H1 (cell line): ENCODE measurements at regions of chr15 and their contacts with region 1.

Region 1: DNA sequence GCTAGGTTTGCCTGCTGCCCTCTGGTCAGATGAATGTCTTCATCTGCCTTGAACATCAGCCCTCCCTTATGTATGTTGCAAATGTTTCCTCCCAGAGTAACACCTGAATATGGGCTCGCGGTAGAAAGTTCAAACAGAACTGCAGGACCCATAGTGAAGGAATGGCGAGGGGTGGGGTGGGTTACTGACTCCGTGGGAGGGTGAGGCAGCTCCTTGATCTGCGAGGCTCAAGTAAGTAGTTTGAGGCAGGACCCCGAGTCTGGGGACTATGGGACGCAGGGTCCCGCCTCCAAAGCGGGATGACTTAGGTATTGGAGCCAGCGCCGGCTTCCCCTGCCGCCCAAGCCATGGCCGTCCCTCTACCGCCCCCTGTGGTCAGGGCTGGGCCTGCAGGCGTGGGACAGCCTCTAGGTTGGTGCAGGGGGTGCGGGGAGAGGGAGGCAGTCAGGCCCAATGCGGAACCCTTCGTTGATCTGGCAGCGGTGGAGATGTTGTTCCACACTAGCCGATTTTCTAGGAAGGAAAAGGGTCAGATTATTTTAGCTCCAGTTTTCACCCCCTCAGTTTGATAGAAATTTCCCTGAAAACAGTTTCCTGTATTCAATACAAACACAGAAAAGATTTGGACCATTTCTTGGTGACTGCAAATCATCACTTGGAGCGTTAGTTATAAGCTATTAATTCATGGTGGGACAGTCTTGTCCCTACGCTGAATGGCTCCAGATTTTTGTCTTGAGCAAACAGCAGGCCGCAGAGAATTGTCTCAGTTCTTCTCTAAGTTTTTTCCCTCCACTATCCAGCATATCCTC is 72.3 kb downstream of the CORO2B start:
- DNase-seq: peak; percentile 72 to 100
- H3K4me3 ChIP-seq: peak overlapping the region in 2 of 4 experiments; percentile 19 to 33; a peak in 2 of 8 replicates
- H3K27ac ChIP-seq: no peak overlapping the region
- H3K4me1 ChIP-seq: peaks cover 6 to 19% (median 11%) of the 10 kb centered on the region in 4 experiments
- H3K27me3 ChIP-seq: no peaks in the 10 kb centered on the region
- CTCF ChIP-seq: peak; percentile 96 to 98 (median 97)
- EP300 ChIP-seq: no peak
- POLR2A ChIP-seq: no peak
- RAD21 ChIP-seq: peak; percentile 81 to 90

Region 2: GRCh38 chr15:68559345-68560310 is 91.5 kb before region 1 on chr15:
- CTCF ChIA-PET with region 1: interaction called, 721 read pairs
- POLR2A ChIA-PET with region 1: no interaction called
- DNase-seq: peak; percentile 80 to 95
- H3K4me3 ChIP-seq: peak overlapping the region; percentile 36 to 68 (median 52)
- H3K27ac ChIP-seq: no peak overlapping the region
- H3K4me1 ChIP-seq: peaks cover 0 to 22% (median 16%) of the 10 kb centered on the region in 4 experiments; a peak in 6 of 7 replicates
- H3K27me3 ChIP-seq: peaks cover 0 to 7% (median 4%) of the 10 kb centered on the region in 4 experiments; a peak in 3 of 7 replicates
- CTCF ChIP-seq: peak; percentile 86 to 93 (median 90)
- EP300 ChIP-seq: no peak
- POLR2A ChIP-seq: peak in 1 of 2 experiments; percentile 41; a peak in 1 of 3 replicates
- RAD21 ChIP-seq: peak; percentile 78 to 86

Region 3: GRCh38 chr15:68589783-68590710 is 61.1 kb before region 1 on chr15:
- CTCF ChIA-PET with region 1: interaction called, 35 read pairs
- POLR2A ChIA-PET with region 1: no interaction called
- DNase-seq: no peak
- H3K4me3 ChIP-seq: no peak overlapping the region
- H3K27ac ChIP-seq: no peak overlapping the region
- H3K4me1 ChIP-seq: peaks cover 2 to 9% (median 3%) of the 10 kb centered on the region in 4 experiments
- H3K27me3 ChIP-seq: no peaks in the 10 kb centered on the region
- CTCF ChIP-seq: no peak
- EP300 ChIP-seq: no peak
- POLR2A ChIP-seq: no peak
- RAD21 ChIP-seq: no peak

Region 4: GRCh38 chr15:68614286-68615035 is 36.6 kb before region 1 on chr15:
- CTCF ChIA-PET with region 1: interaction called, 23 read pairs
- POLR2A ChIA-PET with region 1: interaction called, 3 read pairs
- DNase-seq: peak; percentile 19 to 78
- H3K4me3 ChIP-seq: peak overlapping the region in 1 of 4 experiments; percentile 25; a peak in 2 of 8 replicates
- H3K27ac ChIP-seq: peak overlapping the region; percentile 44; the same call in 1 of the 2 replicates
- H3K4me1 ChIP-seq: peaks cover 7 to 17% (median 11%) of the 10 kb centered on the region in 4 experiments
- H3K27me3 ChIP-seq: no peaks in the 10 kb centered on the region
- CTCF ChIP-seq: peak in 1 of 3 experiments; percentile 10; a peak in 1 of 4 replicates
- EP300 ChIP-seq: no peak
- POLR2A ChIP-seq: no peak
- RAD21 ChIP-seq: no peak; a peak in 1 of 4 replicates

Region 5: DNA sequence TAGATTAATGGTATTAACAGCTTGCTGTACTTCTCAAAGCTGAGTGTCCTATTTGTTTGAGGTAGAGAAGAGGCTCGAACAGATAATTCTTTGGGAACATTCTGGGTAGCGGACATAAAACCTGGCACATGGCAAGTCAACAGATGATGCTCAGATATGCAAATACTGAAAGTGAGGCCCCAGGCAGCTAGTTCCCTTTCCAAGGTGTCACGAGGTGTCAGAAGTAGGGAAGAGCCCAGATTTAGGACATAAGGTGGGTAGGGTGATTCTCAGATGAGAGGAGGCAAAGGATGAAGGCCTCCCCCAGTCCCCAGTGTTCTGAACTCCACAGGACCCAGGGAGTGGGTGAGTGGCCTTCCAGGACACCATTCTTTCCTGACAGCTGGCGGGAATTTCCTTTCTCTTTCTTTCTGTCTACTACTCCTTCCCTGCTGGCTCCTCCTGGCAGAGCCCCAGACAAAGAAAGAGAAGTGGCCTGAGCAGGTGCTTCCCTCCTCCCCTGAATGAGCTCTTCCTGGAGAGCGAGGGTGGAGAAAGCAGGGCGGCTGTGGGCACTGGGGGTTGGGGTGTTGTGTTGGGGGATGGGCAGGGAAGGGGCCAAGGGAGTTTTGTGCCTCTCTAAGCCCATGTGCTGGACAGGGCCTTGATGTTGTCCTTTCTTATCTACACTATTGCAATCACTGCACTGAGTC is 15.2 kb after region 1 on chr15:
- CTCF ChIA-PET with region 1: interaction called, 569 read pairs
- POLR2A ChIA-PET with region 1: no interaction called
- DNase-seq: peak in 1 of 2 experiments; percentile 55
- H3K4me3 ChIP-seq: peak overlapping the region in 1 of 4 experiments; percentile 14; a peak in 2 of 8 replicates
- H3K27ac ChIP-seq: peak overlapping the region; percentile 44; the same call in 1 of the 2 replicates
- H3K4me1 ChIP-seq: peaks cover 5 to 13% (median 9%) of the 10 kb centered on the region in 4 experiments; a peak in 6 of 7 replicates
- H3K27me3 ChIP-seq: peaks cover 0 to 2% (median 0%) of the 10 kb centered on the region in 4 experiments; a peak in 1 of 7 replicates
- CTCF ChIP-seq: no peak
- EP300 ChIP-seq: peak in 1 of 2 experiments; percentile 46; a peak in 1 of 3 replicates
- POLR2A ChIP-seq: no peak
- RAD21 ChIP-seq: no peak; a peak in 1 of 4 replicates

Region 6: GRCh38 chr15:68700455-68701123 is 49.5 kb after region 1 on chr15:
- CTCF ChIA-PET with region 1: no interaction called
- POLR2A ChIA-PET with region 1: no interaction called
- DNase-seq: peak; percentile 13 to 63
- H3K4me3 ChIP-seq: 0 out of 8 replicates have a peak overlapping the region, but pooled peaks of 1 of the 4 experiments have one; percentile 6
- H3K27ac ChIP-seq: no peak overlapping the region
- H3K4me1 ChIP-seq: peaks cover 2 to 17% (median 11%) of the 10 kb centered on the region in 4 experiments
- H3K27me3 ChIP-seq: 0 out of 7 replicates have a peak, but pooled peaks cover 0 to 3% (median 0%) of the 10 kb centered on the region in 4 experiments
- CTCF ChIP-seq: no peak
- EP300 ChIP-seq: no peak
- POLR2A ChIP-seq: no peak
- RAD21 ChIP-seq: no peak

Region 7: DNA sequence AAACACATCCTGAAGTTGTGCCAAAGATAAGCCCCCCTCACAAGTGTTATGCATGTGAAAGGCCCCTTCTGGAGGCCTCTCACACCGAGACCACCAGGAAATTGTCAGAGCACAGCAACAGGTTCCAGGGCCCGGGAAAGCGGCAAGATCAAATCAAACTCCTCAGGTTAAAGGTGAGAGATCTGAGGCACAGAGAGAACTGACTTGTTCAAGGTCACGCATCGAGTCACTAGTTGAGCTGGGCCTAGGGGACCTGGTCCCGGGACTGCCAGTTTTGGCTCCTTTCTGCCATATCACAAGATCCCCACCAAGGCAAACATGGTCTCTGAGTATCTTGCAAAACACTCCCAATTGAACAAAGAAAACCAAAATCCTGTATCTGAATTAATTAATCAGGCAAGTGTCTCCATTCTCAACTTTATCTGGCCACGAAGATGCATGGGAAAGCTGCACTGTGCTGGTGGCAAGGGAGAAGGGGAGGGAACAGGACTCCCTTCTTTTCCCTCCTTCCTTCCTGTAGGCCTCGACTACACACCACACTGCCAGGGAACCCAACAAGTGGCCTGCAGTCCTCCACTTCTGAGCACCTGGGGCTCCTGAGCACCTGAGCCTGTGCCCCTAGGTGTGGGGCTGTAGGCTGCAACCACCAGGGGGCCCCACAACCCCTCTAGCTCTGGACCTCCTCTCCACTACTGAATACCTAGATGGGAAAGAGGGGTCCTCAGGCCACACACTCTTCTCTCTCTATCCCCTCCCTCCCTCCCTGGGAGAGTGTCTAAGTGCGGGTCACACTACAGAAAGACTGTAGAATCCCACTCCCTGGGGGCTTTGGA is 132.3 kb after region 1 on chr15:
- CTCF ChIA-PET with region 1: no interaction called
- POLR2A ChIA-PET with region 1: no interaction called
- DNase-seq: peak in 1 of 2 experiments; percentile 82
- H3K4me3 ChIP-seq: no peak overlapping the region
- H3K27ac ChIP-seq: no peak overlapping the region
- H3K4me1 ChIP-seq: peaks cover 0 to 12% (median 4%) of the 10 kb centered on the region in 4 experiments; a peak in 5 of 7 replicates
- H3K27me3 ChIP-seq: no peaks in the 10 kb centered on the region
- CTCF ChIP-seq: peak; percentile 77 to 79 (median 79)
- EP300 ChIP-seq: no peak
- POLR2A ChIP-seq: no peak
- RAD21 ChIP-seq: peak; percentile 84 to 86